HepG2 (cell line): ENCODE measurements at regions of chr19 and their contacts with region 1.

Region 1: DNA sequence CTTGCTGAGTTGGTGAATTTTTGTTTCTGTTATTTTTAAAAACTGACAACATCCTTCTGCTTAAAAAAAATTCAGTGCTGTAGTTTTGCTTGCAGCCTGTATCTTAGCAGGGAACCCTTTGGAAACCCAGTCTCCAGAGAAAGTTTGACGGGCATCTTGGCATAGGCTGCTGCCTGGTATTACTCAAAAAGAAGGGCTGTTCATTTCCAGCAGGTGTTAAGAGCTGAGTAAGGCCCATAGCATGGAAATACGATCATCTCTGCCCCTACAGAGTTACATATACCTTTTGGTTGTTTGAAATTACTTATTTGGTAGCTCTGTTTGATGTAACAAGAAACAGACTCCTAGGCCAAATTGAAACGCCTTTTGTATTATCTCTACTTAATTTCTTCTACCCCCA is 41.5 kb downstream of the URI1 start:
- DNase-seq: no peak
- ATAC-seq: no peak
- H3K4me3 ChIP-seq: no peak overlapping the region
- H3K27ac ChIP-seq: no peak overlapping the region
- H3K4me1 ChIP-seq: no peaks in the 10 kb centered on the region
- H3K27me3 ChIP-seq: no peaks in the 10 kb centered on the region
- CTCF ChIP-seq: no peak
- EP300 ChIP-seq: no peak
- POLR2A ChIP-seq: no peak
- RAD21 ChIP-seq: no peak

Region 2: GRCh38 chr19:29965492-29965891 is 18.1 kb before region 1 on chr19:
- CTCF ChIA-PET with region 1: no interaction called
- POLR2A ChIA-PET with region 1: interaction called, 3 read pairs
- in situ Hi-C with region 1: no loop called
- intact Hi-C with region 1: loop called (anchors 1 kb)
- DNase-seq: no peak
- ATAC-seq: no peak
- H3K4me3 ChIP-seq: no peak overlapping the region
- H3K27ac ChIP-seq: no peak overlapping the region
- H3K4me1 ChIP-seq: peaks cover 47% of the 10 kb centered on the region
- H3K27me3 ChIP-seq: no peaks in the 10 kb centered on the region
- CTCF ChIP-seq: no peak
- EP300 ChIP-seq: no peak
- POLR2A ChIP-seq: no peak
- RAD21 ChIP-seq: no peak

Region 3: DNA sequence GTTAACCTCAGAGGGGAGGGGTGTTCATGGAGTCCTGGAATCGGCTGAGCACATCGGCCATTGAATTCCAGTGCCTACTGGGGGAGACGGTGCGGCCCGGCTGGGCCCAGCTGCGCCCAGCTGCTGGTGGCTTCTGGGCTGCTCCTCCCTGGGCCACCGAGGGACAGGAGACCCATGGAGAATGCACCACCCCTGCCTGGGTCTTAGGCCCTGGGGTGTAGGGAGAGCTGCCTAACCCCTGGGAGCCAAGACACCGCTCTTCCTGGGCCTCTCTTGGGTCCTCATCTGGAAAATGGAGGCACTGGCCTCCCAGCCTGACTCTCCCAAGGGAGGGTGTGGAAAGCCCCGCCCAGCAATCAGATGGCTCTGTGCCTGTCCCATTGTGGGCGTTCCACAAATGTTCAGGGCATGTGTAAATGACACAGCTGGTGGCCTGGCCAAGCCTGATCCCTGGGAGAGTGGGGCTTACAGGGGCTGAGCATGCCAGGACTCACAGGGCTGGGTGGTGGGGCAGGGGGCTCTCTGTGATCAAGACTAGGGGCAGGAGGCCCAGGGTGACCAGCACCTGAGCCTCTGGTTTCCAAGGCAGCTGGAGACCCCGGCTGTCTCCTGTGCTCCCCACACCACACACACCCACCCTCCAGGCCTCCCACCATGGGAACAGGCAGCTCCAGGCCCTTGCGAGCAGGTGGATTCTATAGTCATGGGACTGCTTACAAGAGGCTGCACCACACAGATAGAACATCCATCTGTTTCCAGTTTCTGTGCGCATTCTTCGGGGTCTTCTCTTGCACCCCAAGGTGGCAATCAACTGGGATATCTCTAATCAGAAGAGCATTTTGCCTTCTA is 109.4 kb after region 1 on chr19:
- CTCF ChIA-PET with region 1: no interaction called
- POLR2A ChIA-PET with region 1: no interaction called
- in situ Hi-C with region 1: no loop called
- intact Hi-C with region 1: no loop called
- DNase-seq: no peak
- ATAC-seq: no peak
- H3K4me3 ChIP-seq: no peak overlapping the region
- H3K27ac ChIP-seq: no peak overlapping the region
- H3K4me1 ChIP-seq: no peaks in the 10 kb centered on the region
- H3K27me3 ChIP-seq: peaks cover 6 to 10% of the 10 kb centered on the region in 2 experiments; a peak in 4 of 5 replicates
- CTCF ChIP-seq: no peak
- EP300 ChIP-seq: no peak
- POLR2A ChIP-seq: no peak
- RAD21 ChIP-seq: no peak